IMR-90 (cell line): ENCODE measurements at regions of chr13 and their contacts with region 1.

Region 1: GRCh38 chr13:65656740-65657329 is 1573.3 kb downstream of the PCDH9 start:
- DNase-seq: peak; percentile 30
- ATAC-seq: no peak
- H3K4me3 ChIP-seq: no peak overlapping the region
- H3K27ac ChIP-seq: no peak overlapping the region
- H3K4me1 ChIP-seq: no peaks in the 10 kb centered on the region
- H3K27me3 ChIP-seq: no peaks in the 10 kb centered on the region
- CTCF ChIP-seq: peak; percentile 76
- POLR2A ChIP-seq: no peak
- RAD21 ChIP-seq: peak; percentile 81

Region 2: GRCh38 chr13:65353951-65354350 is 302.9 kb before region 1 on chr13:
- CTCF ChIA-PET with region 1: no interaction called
- POLR2A ChIA-PET with region 1: no interaction called
- dilution Hi-C with region 1: no loop called
- in situ Hi-C with region 1: no loop called
- intact Hi-C with region 1: no loop called
- DNase-seq: no peak
- ATAC-seq: no peak
- H3K4me3 ChIP-seq: no peak overlapping the region
- H3K27ac ChIP-seq: no peak overlapping the region
- H3K4me1 ChIP-seq: no peaks in the 10 kb centered on the region
- H3K27me3 ChIP-seq: no peaks in the 10 kb centered on the region
- CTCF ChIP-seq: no peak
- POLR2A ChIP-seq: no peak
- RAD21 ChIP-seq: no peak

Region 3: GRCh38 chr13:66200555-66200954 is 543.7 kb after region 1 on chr13:
- CTCF ChIA-PET with region 1: no interaction called
- POLR2A ChIA-PET with region 1: no interaction called
- dilution Hi-C with region 1: no loop called
- in situ Hi-C with region 1: no loop called
- intact Hi-C with region 1: loop called (anchors 10 kb)
- DNase-seq: no peak
- ATAC-seq: peak; percentile 61
- H3K4me3 ChIP-seq: no peak overlapping the region
- H3K27ac ChIP-seq: no peak overlapping the region
- H3K4me1 ChIP-seq: no peaks in the 10 kb centered on the region
- H3K27me3 ChIP-seq: no peaks in the 10 kb centered on the region
- CTCF ChIP-seq: 0 out of 2 replicates have a peak, but pooled peaks have one; percentile 2
- POLR2A ChIP-seq: no peak
- RAD21 ChIP-seq: peak; percentile 5; the same call in 1 of the 2 replicates

Region 4: DNA sequence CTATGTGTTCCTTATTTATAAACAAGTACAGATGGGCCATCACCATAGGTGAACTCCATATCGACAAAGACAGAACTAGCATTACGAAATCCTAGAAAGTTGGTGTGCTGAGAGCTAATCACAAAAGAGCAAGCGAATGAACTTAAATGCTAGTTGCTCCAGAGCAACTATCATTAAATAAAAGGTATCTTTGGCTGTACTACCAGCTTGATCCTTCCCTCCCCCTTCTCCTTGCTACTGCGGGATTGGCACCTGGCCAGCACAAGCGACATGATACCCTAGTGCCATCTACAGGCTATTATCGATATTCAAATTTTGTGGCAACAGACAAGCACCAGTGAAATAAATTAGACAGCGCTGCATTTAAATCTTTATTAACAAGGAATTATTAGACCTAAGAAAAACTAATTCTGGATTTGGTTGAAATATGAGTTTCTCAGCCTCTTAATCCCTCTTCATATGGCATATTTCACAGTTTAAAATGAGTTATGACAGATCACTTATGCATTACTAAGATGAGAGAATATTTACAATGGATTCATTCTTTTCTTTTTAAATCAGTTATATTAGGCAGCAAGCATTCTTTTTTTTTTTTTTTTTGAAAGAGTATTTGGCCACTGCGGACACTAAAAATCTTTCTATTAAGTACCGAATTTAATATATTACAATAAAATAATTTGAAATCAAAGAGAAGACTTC is 1567.5 kb after region 1 on chr13:
- CTCF ChIA-PET with region 1: no interaction called
- POLR2A ChIA-PET with region 1: no interaction called
- dilution Hi-C with region 1: no loop called
- in situ Hi-C with region 1: loop called (anchors 5 kb)
- intact Hi-C with region 1: loop called (anchors 2 kb)
- DNase-seq: peak; percentile 82
- ATAC-seq: peak; percentile 73
- H3K4me3 ChIP-seq: no peak overlapping the region
- H3K27ac ChIP-seq: no peak overlapping the region
- H3K4me1 ChIP-seq: peaks cover 2% of the 10 kb centered on the region
- H3K27me3 ChIP-seq: no peaks in the 10 kb centered on the region
- CTCF ChIP-seq: peak; percentile 77
- POLR2A ChIP-seq: no peak
- RAD21 ChIP-seq: peak; percentile 91

Region 5: GRCh38 chr13:67238277-67238859 is 1581.5 kb after region 1 on chr13:
- CTCF ChIA-PET with region 1: no interaction called
- POLR2A ChIA-PET with region 1: no interaction called
- dilution Hi-C with region 1: no loop called
- in situ Hi-C with region 1: no loop called
- intact Hi-C with region 1: loop called (anchors 5 kb)
- DNase-seq: peak; percentile 36
- ATAC-seq: peak; percentile 56
- H3K4me3 ChIP-seq: no peak overlapping the region
- H3K27ac ChIP-seq: no peak overlapping the region
- H3K4me1 ChIP-seq: no peaks in the 10 kb centered on the region
- H3K27me3 ChIP-seq: no peaks in the 10 kb centered on the region
- CTCF ChIP-seq: peak; percentile 77
- POLR2A ChIP-seq: no peak
- RAD21 ChIP-seq: peak; percentile 74